Gastrocnemius medialis (tissue), 4 donors: ENCODE measurements at regions of chr10 and their contacts with region 1.

Region 1: DNA sequence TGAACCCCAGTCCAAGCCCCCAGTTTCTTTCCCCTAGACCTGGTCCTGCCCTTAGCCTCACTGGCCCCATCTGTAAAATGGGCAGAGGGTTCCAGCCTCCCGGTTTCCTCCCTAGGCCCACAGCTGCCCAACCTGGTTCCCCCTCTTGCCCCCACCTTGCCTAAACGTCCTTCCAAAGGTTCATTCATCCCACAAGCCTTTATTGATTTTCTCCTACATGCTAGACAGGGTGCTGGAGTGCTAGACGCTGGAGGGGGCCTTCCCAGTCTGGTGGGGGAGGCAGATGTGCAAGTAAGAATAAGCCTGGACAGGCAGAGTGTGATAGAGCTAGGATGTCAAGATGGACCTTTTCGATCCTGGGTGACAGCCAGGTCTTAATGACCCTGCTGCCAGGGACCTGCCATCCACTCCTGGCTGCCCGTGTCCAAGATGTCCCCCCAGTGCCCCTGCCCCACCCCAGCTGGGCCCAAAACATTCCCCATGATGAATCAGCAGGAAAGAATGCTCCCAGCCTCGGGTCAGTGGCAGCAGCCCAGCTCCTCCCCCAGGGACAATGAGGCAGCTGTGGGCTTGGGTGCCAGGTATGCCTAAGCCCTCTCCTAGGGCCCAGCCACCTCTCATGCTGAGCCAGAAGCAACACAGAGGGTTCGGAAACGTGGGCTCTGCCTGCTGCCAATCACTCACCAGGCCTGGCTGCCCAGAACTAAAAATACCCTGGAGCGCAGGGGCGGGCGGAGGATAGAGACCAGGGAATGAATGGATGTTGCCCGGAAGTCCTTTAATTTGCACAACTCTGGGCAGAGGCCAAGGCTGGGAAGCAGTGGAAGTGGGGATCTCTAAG is 1.3 kb upstream of the LOXL4 start:
- DNase-seq: peak; percentile 74 to 91
- ATAC-seq: peak; percentile 72 to 78
- H3K4me3 ChIP-seq: peak overlapping the region in 2 of 4 donors; percentile 57 to 61
- H3K27ac ChIP-seq: peak overlapping the region; percentile 76 to 78 (median 78)
- H3K4me1 ChIP-seq: peaks cover 31 to 36% of the 10 kb centered on the region in 2 donors
- H3K27me3 ChIP-seq: no peaks in the 10 kb centered on the region
- CTCF ChIP-seq: no peak
- POLR2A ChIP-seq: no peak

Region 2: GRCh38 chr10:98309366-98310355 is 40.4 kb after region 1 on chr10:
- in situ Hi-C with region 1: loop called in 1 of 4 experiments (anchors 5 kb)
- intact Hi-C with region 1: loop called (anchors 1 kb)
- DNase-seq: peak; percentile 53 to 69
- ATAC-seq: peak; percentile 75
- H3K4me3 ChIP-seq: no peak overlapping the region
- H3K27ac ChIP-seq: peak overlapping the region in 3 of 4 donors; percentile 2 to 32 (median 5)
- H3K4me1 ChIP-seq: peaks cover 19% of the 10 kb centered on the region in 2 donors
- H3K27me3 ChIP-seq: no peaks in the 10 kb centered on the region
- CTCF ChIP-seq: peak; percentile 74 to 89 (median 83)
- POLR2A ChIP-seq: no peak

Region 3: GRCh38 chr10:98314489-98315284 is 45.4 kb after region 1 on chr10:
- in situ Hi-C with region 1: loop called in 1 of 4 experiments (anchors 5 kb)
- intact Hi-C with region 1: loop called (anchors 1 kb)
- DNase-seq: peak; percentile 78 to 88
- ATAC-seq: peak; percentile 90 to 96
- H3K4me3 ChIP-seq: no peak overlapping the region
- H3K27ac ChIP-seq: peak overlapping the region; percentile 80 to 88 (median 81)
- H3K4me1 ChIP-seq: peaks cover 35 to 54% of the 10 kb centered on the region in 2 donors
- H3K27me3 ChIP-seq: no peaks in the 10 kb centered on the region
- CTCF ChIP-seq: no peak
- POLR2A ChIP-seq: no peak

Region 4: DNA sequence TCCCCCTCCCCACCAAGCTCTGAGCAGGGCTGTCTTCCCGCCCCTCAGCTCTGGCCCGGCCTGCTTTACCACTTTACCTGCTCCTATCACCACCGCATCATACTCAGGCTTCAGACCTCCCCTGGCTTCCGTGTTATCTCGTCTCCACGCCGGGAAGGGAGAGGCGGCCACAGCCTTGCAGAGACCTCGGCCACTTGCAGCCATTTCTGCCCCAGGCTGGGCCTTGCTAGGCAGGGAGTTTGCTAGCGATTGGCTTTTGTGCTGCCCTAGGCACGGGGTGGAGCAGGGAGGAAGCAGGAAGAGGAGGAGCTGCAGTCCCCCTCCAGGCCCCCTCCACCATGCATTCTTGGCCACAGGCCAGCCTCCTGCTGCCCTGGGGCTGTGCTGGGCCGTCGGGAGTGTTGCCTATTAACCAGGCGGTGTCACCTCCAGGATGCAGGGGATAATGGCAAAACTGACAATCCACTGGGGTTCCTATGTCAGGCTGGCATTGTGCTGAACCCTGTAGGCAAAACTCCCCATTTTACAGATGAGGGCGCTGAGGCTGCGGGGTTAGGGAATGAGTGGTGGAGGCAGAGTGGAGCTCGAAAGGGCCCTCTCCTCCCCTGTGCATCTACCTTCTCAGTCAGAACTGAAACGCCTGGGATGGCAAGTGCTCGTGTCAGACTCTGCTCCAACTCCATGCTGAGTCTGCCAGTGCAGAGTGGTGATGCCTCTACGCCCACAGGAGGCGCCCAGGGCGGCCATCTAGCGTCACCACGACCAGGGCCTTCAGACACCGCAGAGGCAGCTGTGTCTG is 145.8 kb after region 1 on chr10 and contains the start of gene PYROXD2:
- in situ Hi-C with region 1: no loop called
- intact Hi-C with region 1: loop called (anchors 5 kb)
- DNase-seq: peak; percentile 73 to 81
- ATAC-seq: peak; percentile 53 to 77
- H3K4me3 ChIP-seq: peak within 1 kb of the TSS; percentile 57 to 62 (median 60)
- H3K27ac ChIP-seq: peak within 1 kb of the TSS; percentile 69 to 81 (median 74)
- H3K4me1 ChIP-seq: peaks cover 31 to 39% of the 10 kb centered on the region in 2 donors
- H3K27me3 ChIP-seq: no peaks in the 10 kb centered on the region
- CTCF ChIP-seq: no peak
- POLR2A ChIP-seq: peak; percentile 38
- total RNA-seq, gene PYROXD2: 0.22 to 7.8 (median 1.3) TPM